Left ventricle myocardium inferior (tissue), 1 donor: ENCODE measurements at regions of chr5 and their contacts with region 1.

Region 1: DNA sequence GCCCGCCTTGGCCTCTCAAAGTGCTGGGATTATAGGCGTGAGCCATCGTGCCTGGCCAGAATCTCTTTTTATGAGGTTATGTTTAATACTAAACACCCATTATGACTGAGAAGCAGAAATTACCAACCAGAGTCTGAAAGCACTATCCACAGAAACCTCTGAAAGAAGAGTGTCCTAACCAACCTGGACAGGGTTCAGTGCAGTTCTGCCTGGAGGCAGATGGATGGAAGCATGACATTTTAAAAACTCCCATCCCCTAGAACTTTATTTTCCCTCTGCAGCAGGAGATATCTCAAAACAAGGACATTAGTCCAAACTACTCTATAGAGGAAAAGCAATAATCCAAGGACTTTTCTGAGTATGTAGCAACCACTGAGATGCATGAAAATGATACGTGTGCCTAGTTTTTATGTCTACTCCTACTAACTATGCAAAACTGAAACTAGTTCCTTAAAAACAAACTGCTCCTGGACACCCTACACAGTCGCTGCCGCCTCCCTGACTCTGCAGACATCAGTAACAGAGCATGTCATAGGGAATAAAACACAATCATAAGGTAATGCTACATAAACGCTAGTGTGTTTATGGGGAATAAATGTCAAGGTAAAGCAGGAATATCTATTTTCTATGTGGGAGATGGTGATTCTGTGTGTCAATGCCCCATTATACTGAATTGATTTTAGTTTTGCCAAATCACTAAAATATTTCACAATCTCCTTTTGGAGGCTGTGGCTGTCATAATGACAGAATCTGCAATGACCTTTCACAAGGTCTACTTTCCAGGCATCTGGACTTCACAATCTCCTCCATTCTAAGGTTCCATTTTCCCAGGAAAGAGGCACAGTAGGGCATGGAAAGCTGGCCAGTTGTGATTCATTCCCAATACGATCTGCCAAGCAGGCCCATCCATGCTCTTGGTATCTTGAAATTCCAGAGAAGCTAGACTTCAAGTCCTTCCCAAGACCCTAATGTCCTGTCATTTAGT is 122.8 kb downstream of the SIL1 start:
- DNase-seq: no peak
- H3K4me3 ChIP-seq: no peak overlapping the region
- H3K27ac ChIP-seq: no peak overlapping the region
- H3K4me1 ChIP-seq: peaks cover 38% of the 10 kb centered on the region
- H3K27me3 ChIP-seq: no peaks in the 10 kb centered on the region
- CTCF ChIP-seq: no peak

Region 2: DNA sequence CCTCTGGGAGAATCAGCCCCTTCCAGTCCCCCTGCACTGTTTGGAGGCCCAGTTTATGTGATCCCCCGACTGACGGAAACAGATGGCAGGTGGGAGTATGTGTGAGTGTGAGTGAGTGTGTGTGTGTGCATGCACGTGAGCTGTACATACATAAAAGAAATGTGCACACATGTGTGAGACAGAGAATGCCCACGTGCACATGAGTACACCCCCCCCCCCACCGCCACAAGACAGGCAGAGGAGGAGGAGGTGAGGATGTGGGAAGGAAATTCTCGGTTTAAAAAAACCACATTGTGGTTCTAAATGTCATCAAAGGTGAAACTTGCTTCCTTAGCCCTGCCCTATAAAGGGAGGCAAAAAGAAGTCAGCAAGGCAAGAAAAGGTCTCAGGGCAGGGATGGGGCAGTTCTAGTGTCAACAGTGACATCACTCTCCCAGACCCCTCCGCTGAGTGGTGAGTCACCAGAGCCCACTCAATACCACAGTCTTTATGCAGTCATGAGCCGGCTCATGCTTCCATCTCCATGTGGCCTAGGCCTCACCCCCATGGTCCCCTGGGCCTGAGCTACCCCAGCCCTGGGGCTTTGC is 421.0 kb before region 1 on chr5:
- intact Hi-C with region 1: no loop called
- DNase-seq: no peak
- H3K4me3 ChIP-seq: no peak overlapping the region
- H3K27ac ChIP-seq: peak overlapping the region; percentile 19
- H3K4me1 ChIP-seq: peaks cover 23% of the 10 kb centered on the region
- H3K27me3 ChIP-seq: no peaks in the 10 kb centered on the region
- CTCF ChIP-seq: no peak

Region 3: GRCh38 chr5:138789771-138790242 is 285.6 kb before region 1 on chr5:
- intact Hi-C with region 1: no loop called
- DNase-seq: no peak
- H3K4me3 ChIP-seq: no peak overlapping the region
- H3K27ac ChIP-seq: no peak overlapping the region
- H3K4me1 ChIP-seq: peaks cover 97% of the 10 kb centered on the region
- H3K27me3 ChIP-seq: no peaks in the 10 kb centered on the region
- CTCF ChIP-seq: peak; percentile 66

Region 4: GRCh38 chr5:138884546-138884945 is 190.8 kb before region 1 on chr5:
- intact Hi-C with region 1: loop called (anchors 10 kb)
- DNase-seq: no peak
- H3K4me3 ChIP-seq: no peak overlapping the region
- H3K27ac ChIP-seq: no peak overlapping the region
- H3K4me1 ChIP-seq: peaks cover 29% of the 10 kb centered on the region
- H3K27me3 ChIP-seq: no peaks in the 10 kb centered on the region
- CTCF ChIP-seq: no peak

Region 5: DNA sequence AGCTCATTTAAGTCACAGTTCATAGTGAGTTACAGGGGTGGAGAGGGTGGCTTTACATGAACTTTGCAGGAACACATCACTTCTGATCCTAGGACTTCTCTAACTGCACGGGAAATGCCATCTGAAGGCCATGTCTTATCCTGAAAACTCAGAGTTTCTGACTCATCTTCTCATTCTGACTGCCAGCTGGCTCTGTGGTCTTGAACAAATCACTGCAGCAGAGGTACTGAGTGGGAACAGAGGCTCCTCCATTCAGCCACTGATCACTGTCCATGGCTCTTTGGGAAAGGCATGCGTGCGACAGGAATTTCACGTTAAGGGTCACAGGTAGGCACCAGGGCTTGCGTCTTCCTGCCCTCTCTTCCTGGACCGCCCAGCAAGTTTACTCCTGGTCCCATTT is 85.6 kb before region 1 on chr5:
- intact Hi-C with region 1: no loop called
- DNase-seq: no peak
- H3K4me3 ChIP-seq: no peak overlapping the region
- H3K27ac ChIP-seq: no peak overlapping the region
- H3K4me1 ChIP-seq: peaks cover 3% of the 10 kb centered on the region
- H3K27me3 ChIP-seq: no peaks in the 10 kb centered on the region
- CTCF ChIP-seq: no peak

Region 6: GRCh38 chr5:139232147-139232724 is 156.9 kb after region 1 on chr5:
- intact Hi-C with region 1: no loop called
- DNase-seq: no peak
- H3K4me3 ChIP-seq: no peak overlapping the region
- H3K27ac ChIP-seq: no peak overlapping the region
- H3K4me1 ChIP-seq: no peaks in the 10 kb centered on the region
- H3K27me3 ChIP-seq: no peaks in the 10 kb centered on the region
- CTCF ChIP-seq: no peak